ENCODE measurements at regions of chr13 and their contacts with region 1.

Region 1: GRCh38 chr13:24135674-24136300 is 24.7 kb upstream of the SPATA13 start:
- DNase-seq: no peak
- H3K4me3 ChIP-seq: no peak overlapping the region
- H3K27ac ChIP-seq: no peak overlapping the region
- H3K4me1 ChIP-seq: no peaks in the 10 kb centered on the region
- H3K27me3 ChIP-seq: no peaks in the 10 kb centered on the region
- CTCF ChIP-seq: no peak

Region 2: GRCh38 chr13:24233351-24233901 is 97.6 kb after region 1 on chr13:
- CTCF ChIA-PET with region 1: interaction called, 11 read pairs
- dilution Hi-C with region 1: no loop called
- in situ Hi-C with region 1: no loop called
- intact Hi-C with region 1: no loop called
- DNase-seq: no peak
- H3K4me3 ChIP-seq: no peak overlapping the region
- H3K27ac ChIP-seq: no peak overlapping the region
- H3K4me1 ChIP-seq: no peaks in the 10 kb centered on the region
- H3K27me3 ChIP-seq: no peaks in the 10 kb centered on the region
- CTCF ChIP-seq: no peak

Measured in mammary epithelial cell (primary cell).